A549 (cell line): ENCODE measurements at regions of chr16 and their contacts with region 1.

Region 1: DNA sequence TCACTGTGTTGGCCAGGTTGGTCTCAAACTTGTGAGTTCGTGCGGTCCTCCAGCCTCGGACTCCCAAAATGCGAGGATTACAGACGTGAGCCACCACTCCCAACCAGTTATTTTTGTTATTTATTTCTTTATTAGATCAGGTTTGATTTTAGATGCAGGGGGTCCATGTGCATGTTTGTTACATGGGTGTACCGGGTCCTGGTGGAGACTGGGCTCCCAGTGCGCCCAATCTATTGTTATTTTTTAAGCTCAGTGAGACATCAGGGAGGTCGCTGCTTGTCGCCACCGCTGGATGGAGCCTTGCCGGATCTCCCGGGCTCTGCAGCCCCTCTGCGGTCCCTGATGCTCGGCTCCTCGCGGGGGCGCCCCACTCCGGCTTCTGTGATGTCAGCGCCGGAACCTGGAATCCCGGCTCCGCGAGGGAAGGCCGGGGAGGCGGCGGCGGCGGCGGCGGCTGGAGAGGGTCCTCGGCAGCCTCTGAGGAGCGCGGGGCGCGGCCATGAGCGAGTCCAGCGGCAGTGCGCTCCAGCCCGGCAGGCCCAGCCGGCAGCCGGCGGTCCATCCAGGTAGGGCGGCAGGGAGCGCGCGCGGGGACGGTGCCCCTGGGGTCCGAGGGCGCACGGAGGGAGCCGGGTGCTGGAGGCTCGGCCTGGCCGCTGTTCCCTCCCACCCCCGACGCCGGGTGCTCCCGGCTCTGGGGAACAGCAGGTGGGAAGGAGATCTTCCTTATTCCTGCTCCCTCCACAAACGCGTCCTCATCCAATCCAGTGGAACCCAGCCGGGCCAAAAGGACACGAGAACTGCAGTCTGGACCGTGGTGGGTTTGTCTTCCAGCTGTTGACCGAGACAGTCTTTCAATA is at the start of gene TMC7:
- DNase-seq: peak; percentile 86 to 92
- ATAC-seq: peak; percentile 99
- H3K4me3 ChIP-seq: peak within 1 kb of the TSS; percentile 63
- H3K27ac ChIP-seq: peak within 1 kb of the TSS; percentile 87 to 96
- H3K4me1 ChIP-seq: peaks cover 33% of the 10 kb centered on the region
- CTCF ChIP-seq: peak; percentile 98
- EP300 ChIP-seq: no peak
- POLR2A ChIP-seq: peak; percentile 27; the same call in 1 of the 2 replicates
- RAD21 ChIP-seq: peak; percentile 89 to 99
- polyA plus RNA-seq, gene TMC7: 9.4 and 15.0 TPM in 2 replicates

Region 2: GRCh38 chr16:18969050-18969854 is 14.5 kb before region 1 on chr16:
- CTCF ChIA-PET with region 1: interaction called, 43 read pairs
- POLR2A ChIA-PET with region 1: no interaction called
- DNase-seq: peak; percentile 75 to 94
- ATAC-seq: peak; percentile 97 to 99
- H3K4me3 ChIP-seq: peak overlapping the region; percentile 34; the same call in 2 of the 3 replicates
- H3K27ac ChIP-seq: 0 out of 6 replicates have a peak overlapping the region, but pooled peaks of 1 of the 2 experiments have one; percentile 6
- H3K4me1 ChIP-seq: 0 out of 3 replicates have a peak, but pooled peaks cover 4% of the 10 kb centered on the region
- CTCF ChIP-seq: peak; percentile 92
- EP300 ChIP-seq: no peak
- POLR2A ChIP-seq: no peak
- RAD21 ChIP-seq: peak; percentile 91 to 93

Region 3: DNA sequence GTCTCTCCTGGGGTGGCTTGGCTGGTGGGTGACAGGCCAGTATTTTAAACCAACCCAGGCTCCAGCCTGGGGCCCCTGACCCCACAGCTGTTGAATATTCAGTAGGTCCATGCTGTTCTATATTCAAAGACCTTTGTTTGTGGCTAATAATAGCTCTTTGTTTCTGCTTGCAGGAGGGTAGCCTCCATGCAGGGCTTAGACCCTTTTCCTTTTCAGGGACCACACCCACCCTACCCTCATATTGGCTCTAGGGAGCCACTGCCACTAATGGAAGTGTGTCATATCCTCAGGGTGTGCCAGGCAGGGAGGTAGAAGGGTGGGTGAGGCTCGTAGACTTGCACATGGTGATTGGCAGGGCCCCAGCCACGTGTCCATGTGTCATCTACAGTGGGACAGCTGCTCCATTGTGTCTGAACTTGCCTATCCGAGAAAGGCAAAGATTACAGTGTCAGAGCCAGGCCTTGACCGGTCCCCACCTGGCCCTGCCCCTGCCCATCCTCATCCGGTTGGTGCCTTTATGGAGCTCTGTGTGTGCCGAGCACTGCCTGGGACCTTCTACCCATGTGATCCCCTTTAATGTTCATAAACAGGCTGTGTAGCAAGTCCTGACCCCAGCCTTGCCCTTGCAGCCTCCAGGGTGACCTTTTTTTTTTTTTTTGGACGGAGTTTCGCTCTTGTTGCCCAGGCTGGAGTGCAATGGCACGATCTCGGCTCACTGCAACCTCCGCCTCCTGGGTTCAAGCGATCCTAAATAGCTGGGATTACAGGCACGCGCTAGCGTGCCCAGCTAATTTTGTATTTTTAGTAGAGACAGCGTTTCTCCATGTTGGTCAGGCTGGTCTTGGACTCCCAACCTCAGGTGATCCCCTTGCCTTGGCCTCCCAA is 22.0 kb after region 1 on chr16:
- CTCF ChIA-PET with region 1: interaction called, 95 read pairs
- POLR2A ChIA-PET with region 1: interaction called, 3 read pairs
- DNase-seq: peak; percentile 44 to 76
- ATAC-seq: peak; percentile 60 to 66; a peak in 5 of 6 replicates
- H3K4me3 ChIP-seq: no peak overlapping the region
- H3K27ac ChIP-seq: peak overlapping the region; percentile 46 to 54
- H3K4me1 ChIP-seq: peaks cover 36% of the 10 kb centered on the region
- CTCF ChIP-seq: no peak
- EP300 ChIP-seq: no peak
- POLR2A ChIP-seq: no peak
- RAD21 ChIP-seq: no peak

Region 4: DNA sequence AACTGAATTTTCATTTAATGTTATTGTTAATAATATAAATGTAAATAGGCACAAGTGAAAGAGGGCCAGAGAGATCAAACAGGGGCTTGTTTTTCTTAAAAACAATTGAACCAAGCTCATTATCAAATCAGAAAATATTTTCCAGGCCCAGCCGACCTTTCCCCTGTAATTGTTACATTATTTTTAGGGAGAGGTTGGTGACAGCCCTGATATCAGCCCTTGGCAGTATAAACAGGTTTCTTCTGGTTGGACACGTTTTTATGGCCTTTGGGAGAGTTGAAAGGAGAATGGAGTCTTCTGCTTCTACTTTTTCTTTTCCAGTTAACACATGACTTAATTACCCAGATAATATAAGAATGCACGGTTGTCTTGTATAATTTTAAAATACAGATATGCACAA is 43.6 kb after region 1 on chr16:
- CTCF ChIA-PET with region 1: interaction called, 26 read pairs
- POLR2A ChIA-PET with region 1: no interaction called
- DNase-seq: no peak
- ATAC-seq: no peak
- H3K4me3 ChIP-seq: no peak overlapping the region
- H3K27ac ChIP-seq: no peak overlapping the region
- H3K4me1 ChIP-seq: no peaks in the 10 kb centered on the region
- CTCF ChIP-seq: no peak
- EP300 ChIP-seq: no peak
- POLR2A ChIP-seq: no peak
- RAD21 ChIP-seq: no peak

Region 5: DNA sequence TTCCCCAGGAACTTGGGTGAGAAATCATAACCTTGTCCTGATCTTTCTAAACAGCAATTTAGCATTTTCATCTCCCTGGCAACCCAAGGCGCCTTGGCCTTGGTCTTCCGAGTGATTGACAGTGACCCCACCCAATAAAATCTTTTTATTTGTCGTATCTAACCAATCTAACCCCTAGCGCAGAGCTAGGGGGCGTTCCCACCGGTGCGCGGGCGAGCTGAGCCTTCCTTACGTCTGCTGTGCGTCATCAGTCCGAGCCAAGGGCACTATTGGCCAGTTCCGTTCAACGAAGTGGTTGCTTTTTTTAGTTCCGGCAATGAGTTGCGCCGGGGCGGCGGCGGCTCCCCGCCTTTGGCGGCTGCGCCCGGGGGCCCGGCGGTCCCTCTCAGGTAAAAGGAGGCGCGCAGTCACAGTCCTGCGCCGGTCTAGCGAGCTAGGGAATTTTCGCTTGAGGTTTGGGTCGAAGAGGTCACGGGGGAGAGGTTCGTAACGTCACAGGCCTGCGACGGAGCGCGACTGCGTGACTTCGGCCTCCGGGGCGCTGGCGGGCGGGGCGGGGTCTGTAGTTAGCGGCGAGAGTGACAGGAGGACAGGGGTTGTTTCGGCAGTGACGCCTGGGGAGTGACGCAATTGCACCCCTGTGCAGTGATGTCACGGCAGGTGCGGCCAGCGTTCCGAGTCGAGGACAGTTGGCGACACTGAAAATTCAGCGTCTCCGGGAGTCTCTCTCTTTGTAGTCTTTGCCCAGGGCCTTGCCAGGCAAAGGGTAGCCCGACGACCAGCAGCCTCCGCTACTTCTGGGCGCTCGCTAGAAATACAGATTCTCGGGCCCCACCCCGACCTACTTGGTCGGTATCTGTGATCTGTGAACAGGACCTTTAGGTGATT is 83.8 kb after region 1 on chr16 and contains the start of gene COQ7:
- CTCF ChIA-PET with region 1: interaction called, 130 read pairs
- POLR2A ChIA-PET with region 1: interaction called, 8 read pairs
- DNase-seq: peak; percentile 95 to 100
- ATAC-seq: peak; percentile 93
- H3K4me3 ChIP-seq: peak within 1 kb of the TSS; percentile 63
- H3K27ac ChIP-seq: peak within 1 kb of the TSS; percentile 95 to 99
- H3K4me1 ChIP-seq: peaks cover 12% of the 10 kb centered on the region; the same call in 2 of the 3 replicates
- CTCF ChIP-seq: no peak
- EP300 ChIP-seq: no peak
- POLR2A ChIP-seq: peak; percentile 17; the same call in 1 of the 2 replicates
- RAD21 ChIP-seq: no peak
- polyA plus RNA-seq, gene COQ7: 17.9 and 23.8 TPM in 2 replicates